ENCODE measurements at regions of chr5 and their contacts with region 1.

Region 1: GRCh38 chr5:76256116-76256889 is 146.8 kb upstream of the IQGAP2 start:
- DNase-seq: peak; percentile 75
- H3K4me3 Mint-ChIP-seq: no peak overlapping the region
- H3K27ac Mint-ChIP-seq: no peak overlapping the region
- H3K4me1 Mint-ChIP-seq: peaks cover 10% of the 10 kb centered on the region
- H3K27me3 Mint-ChIP-seq: peaks cover 16% of the 10 kb centered on the region

Region 2: DNA sequence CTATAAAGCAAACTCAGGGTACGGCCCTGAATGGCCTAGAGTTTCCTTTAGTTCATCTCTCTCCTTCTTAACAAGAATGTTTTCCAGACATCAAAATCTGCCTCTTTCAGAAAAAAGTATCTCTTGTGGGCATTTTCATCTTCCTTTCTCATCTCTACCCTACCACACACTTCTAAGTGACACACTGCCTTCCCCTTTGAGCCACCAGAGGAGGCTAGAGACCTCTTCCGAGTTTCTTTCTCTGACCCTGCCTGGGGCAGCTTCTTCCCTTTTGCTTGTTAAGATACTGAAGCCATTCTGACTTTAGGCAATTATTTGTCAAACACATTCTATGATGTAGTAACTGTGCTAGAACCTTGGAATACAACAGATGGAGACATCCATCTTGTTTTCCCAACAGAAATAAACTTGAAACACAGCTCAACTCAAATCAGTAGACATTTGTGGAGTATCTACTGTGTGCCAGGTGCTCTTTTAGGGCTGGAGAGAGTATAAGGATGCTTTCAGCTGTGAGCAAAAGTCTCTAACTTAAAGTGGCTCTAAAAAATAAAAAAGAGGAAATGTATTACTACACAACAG is 181.7 kb before region 1 on chr5:
- CTCF ChIA-PET with region 1: interaction called, 14 read pairs
- POLR2A ChIA-PET with region 1: no interaction called
- DNase-seq: peak; percentile 37
- H3K4me3 Mint-ChIP-seq: no peak overlapping the region
- H3K27ac Mint-ChIP-seq: no peak overlapping the region
- H3K4me1 Mint-ChIP-seq: no peaks in the 10 kb centered on the region
- H3K27me3 Mint-ChIP-seq: peaks cover 70% of the 10 kb centered on the region

Region 3: GRCh38 chr5:76145945-76146344 is 110.4 kb before region 1 on chr5:
- CTCF ChIA-PET with region 1: interaction called, 10 read pairs
- POLR2A ChIA-PET with region 1: no interaction called
- DNase-seq: peak; percentile 21
- H3K4me3 Mint-ChIP-seq: no peak overlapping the region
- H3K27ac Mint-ChIP-seq: no peak overlapping the region
- H3K4me1 Mint-ChIP-seq: no peaks in the 10 kb centered on the region
- H3K27me3 Mint-ChIP-seq: no peaks in the 10 kb centered on the region